Heart right ventricle (tissue), 16 donors: ENCODE measurements at regions of chr2 and their contacts with region 1.

Region 1: DNA sequence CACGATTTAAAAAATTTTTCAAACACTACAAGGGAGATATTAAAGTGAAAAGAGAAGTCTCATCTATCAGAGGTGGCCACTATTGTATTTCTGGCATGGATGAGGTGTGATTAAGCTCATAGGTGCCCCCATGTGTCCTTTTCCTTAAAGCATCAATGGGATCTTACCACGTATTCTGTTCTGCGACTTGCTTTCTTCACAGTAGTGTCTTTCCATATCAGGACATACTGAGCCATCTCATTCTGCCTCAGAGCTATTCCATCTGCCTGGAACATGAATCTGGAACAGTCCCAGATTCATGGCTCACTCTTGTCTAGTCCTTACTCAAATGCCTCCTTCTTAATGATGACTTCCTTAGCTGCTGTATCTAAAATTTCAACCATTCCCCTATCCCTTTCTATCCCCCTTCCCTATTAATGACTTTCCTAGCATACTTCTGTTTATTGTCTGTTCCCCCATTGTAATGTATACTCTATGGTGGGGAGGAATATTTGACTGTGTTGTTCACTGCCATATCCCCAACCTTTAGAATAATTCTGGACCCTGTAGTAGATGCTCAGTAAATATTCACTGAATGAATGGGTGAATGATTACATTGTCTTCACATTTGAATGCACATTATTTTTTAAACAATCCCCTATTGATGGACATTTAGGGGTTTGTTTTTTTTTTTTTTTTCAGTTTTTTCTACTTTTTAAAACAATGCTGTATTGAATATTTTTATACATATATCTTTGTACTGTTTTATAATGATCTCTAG is 11.1 kb downstream of the STAMBP start:
- DNase-seq: no peak
- ATAC-seq: no peak
- H3K4me3 ChIP-seq: no peak overlapping the region
- H3K27ac ChIP-seq: no peak overlapping the region
- H3K4me1 ChIP-seq: peaks cover 0 to 27% (median 9%) of the 10 kb centered on the region in 9 donors
- H3K27me3 ChIP-seq: no peaks in the 10 kb centered on the region
- CTCF ChIP-seq: no peak

Region 2: GRCh38 chr2:75627895-75628504 is 1788.2 kb after region 1 on chr2:
- intact Hi-C with region 1: loop called in 1 of 10 experiments (anchors 5 kb)
- DNase-seq: peak; percentile 56 to 62
- ATAC-seq: peak in 4 of 8 donors; percentile 65 to 80 (median 71)
- H3K4me3 ChIP-seq: no peak overlapping the region
- H3K27ac ChIP-seq: no peak overlapping the region
- H3K4me1 ChIP-seq: peaks cover 0 to 14% (median 0%) of the 10 kb centered on the region in 9 donors
- H3K27me3 ChIP-seq: peaks cover 0 to 15% (median 0%) of the 10 kb centered on the region in 7 donors
- CTCF ChIP-seq: peak; percentile 65 to 94 (median 92)